ENCODE measurements at regions of chr18 and their contacts with region 1.

Region 1: GRCh38 chr18:48470484-48471180 is 61.4 kb upstream of the ZBTB7C start:
- H3K4me3 Mint-ChIP-seq: no peak overlapping the region
- H3K27ac Mint-ChIP-seq: no peak overlapping the region
- H3K4me1 Mint-ChIP-seq: no peaks in the 10 kb centered on the region
- H3K27me3 Mint-ChIP-seq: peaks cover 30% of the 10 kb centered on the region

Region 2: DNA sequence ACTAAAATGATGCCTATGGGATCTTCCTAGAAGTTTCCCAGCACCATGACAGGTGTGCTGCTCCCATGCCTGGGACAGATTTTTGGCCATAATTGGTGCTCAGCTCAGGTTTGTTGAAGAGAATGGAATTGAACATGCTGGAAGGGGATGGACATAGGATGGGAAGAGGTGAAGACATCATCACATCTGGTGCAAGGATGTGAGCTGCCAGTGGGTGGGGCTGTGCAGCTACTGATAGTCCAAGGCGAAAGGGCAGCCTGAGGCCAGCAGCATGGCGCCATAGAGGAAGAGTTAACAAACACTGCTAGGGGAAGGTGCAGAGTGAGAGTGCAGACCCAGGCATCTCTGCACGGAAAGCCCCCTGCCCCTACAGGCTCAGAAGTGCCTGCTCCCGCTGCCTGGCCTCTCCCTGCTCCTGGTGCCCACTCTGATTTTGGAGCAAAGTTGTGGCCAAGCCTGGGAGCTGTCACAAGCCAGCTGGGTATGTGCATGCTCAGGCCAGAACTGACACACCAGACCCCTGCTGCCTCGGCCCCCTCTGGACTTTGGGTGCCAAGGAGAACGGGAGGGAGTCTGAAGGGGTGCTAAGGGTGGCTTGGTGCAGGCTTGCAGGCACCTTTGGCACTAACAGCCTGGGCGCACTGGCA is 240.0 kb before region 1 on chr18:
- intact Hi-C with region 1: loop called (anchors 5 kb)
- H3K4me3 Mint-ChIP-seq: no peak overlapping the region
- H3K27ac Mint-ChIP-seq: no peak overlapping the region
- H3K4me1 Mint-ChIP-seq: peaks cover 34% of the 10 kb centered on the region
- H3K27me3 Mint-ChIP-seq: peaks cover 5% of the 10 kb centered on the region

Measured in dendritic cell treated with granulocyte-macrophage colony-stimulating factor and Interleukin-4, amounts not matched to agents 40 ng/mL and 50 ng/mL, for 4 days (primary cell).